ENCODE measurements at regions of chr15 and their contacts with region 1.

Region 1: DNA sequence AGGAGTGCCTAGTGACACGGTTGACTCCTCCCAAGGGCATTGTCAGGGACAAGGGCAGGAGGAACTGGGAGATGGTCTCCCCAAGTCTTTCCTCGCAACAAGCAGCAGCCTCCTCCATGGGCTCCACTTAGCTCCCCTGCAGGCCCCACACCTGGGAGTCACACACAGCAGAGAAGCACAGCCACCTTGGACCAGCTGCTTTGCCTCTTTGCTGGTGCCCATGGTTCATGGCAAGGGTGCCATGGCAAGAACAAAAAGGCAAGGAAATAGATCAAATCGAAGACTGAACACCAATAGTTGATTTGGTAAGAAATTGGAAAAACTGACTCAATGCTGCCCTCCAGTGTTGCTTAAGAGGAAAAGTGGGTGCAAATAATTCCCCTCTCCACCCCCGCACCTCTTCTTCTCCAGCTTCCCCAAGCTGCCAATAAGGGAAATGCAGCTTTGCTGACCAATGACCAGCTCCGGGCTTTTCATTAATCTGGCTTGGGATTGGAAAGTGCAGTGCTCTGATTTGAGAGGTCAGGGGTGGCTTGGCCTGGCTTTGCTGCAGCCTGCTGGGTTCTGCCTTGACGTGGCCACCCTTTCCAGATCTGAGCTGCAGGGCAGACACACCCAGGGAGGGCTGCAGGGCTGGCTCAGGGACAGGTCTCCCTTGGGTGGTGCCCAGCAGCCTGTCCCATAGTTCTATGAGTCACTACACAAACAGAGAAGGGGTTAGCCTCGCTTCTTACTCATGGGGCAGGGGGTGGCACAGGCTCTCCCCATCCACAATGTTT is 162.0 kb downstream of the KLF13 start:
- DNase-seq: peak; percentile 63 to 82 (median 81)
- ATAC-seq: peak; percentile 95
- H3K4me3 ChIP-seq: no peak overlapping the region
- H3K27ac ChIP-seq: no peak overlapping the region
- H3K4me1 ChIP-seq: no peaks in the 10 kb centered on the region; a peak in 1 of 5 replicates
- H3K27me3 ChIP-seq: peaks cover 0 to 12% of the 10 kb centered on the region in 2 experiments; a peak in 1 of 5 replicates
- CTCF ChIP-seq: peak; percentile 84 to 97 (median 96)
- EP300 ChIP-seq: no peak
- POLR2A ChIP-seq: no peak
- RAD21 ChIP-seq: peak; percentile 59 to 80

Region 2: GRCh38 chr15:31200735-31201151 is 287.9 kb before region 1 on chr15:
- CTCF ChIA-PET with region 1: interaction called, 6 read pairs
- POLR2A ChIA-PET with region 1: no interaction called
- in situ Hi-C with region 1: loop called (anchors 5 kb)
- intact Hi-C with region 1: no loop called
- DNase-seq: peak; percentile 31 to 55 (median 39)
- ATAC-seq: peak; percentile 82
- H3K4me3 ChIP-seq: no peak overlapping the region
- H3K27ac ChIP-seq: no peak overlapping the region
- H3K4me1 ChIP-seq: no peaks in the 10 kb centered on the region
- H3K27me3 ChIP-seq: peaks cover 0 to 40% of the 10 kb centered on the region in 2 experiments; a peak in 3 of 5 replicates
- CTCF ChIP-seq: peak; percentile 45 to 66 (median 56); a peak in 5 of 6 replicates
- EP300 ChIP-seq: no peak
- POLR2A ChIP-seq: no peak
- RAD21 ChIP-seq: peak; percentile 65 to 76

Region 3: GRCh38 chr15:31215490-31216214 is 273.0 kb before region 1 on chr15:
- CTCF ChIA-PET with region 1: interaction called, 3 read pairs
- POLR2A ChIA-PET with region 1: no interaction called
- in situ Hi-C with region 1: no loop called
- intact Hi-C with region 1: loop called (anchors 5 kb)
- DNase-seq: peak; percentile 73 to 87 (median 84)
- ATAC-seq: peak; percentile 99
- H3K4me3 ChIP-seq: peak overlapping the region; percentile 34
- H3K27ac ChIP-seq: no peak overlapping the region
- H3K4me1 ChIP-seq: peaks cover 0 to 18% of the 10 kb centered on the region in 2 experiments; a peak in 2 of 5 replicates
- H3K27me3 ChIP-seq: peaks cover 8 to 26% of the 10 kb centered on the region in 2 experiments
- CTCF ChIP-seq: peak; percentile 70 to 90 (median 83)
- EP300 ChIP-seq: no peak
- POLR2A ChIP-seq: no peak
- RAD21 ChIP-seq: peak; percentile 71 to 76

Region 4: DNA sequence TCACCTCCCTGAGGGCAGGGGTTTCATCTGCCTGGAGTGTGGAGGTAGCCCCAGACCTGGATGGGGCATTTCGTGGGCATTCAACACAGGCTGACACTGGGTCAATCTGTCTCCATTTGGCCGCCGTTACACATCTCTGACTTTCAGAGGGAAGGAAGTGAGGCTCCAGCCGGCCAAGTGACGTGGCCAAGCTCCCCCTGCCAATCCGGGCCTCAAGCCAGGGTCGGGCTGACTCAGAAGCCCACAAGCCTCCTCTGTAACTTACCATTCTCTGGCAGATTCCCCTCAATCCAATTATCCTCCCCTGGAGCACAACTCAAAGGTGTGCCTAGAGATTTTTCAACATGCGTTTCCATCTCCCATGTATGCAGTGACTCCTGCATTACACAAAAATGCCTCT is 65.6 kb after region 1 on chr15:
- CTCF ChIA-PET with region 1: no interaction called
- POLR2A ChIA-PET with region 1: no interaction called
- in situ Hi-C with region 1: no loop called
- intact Hi-C with region 1: no loop called
- DNase-seq: no peak
- ATAC-seq: no peak
- H3K4me3 ChIP-seq: no peak overlapping the region
- H3K27ac ChIP-seq: no peak overlapping the region
- H3K4me1 ChIP-seq: no peaks in the 10 kb centered on the region
- H3K27me3 ChIP-seq: peaks cover 0 to 56% of the 10 kb centered on the region in 2 experiments; a peak in 2 of 5 replicates
- CTCF ChIP-seq: no peak
- EP300 ChIP-seq: no peak
- POLR2A ChIP-seq: no peak
- RAD21 ChIP-seq: no peak